ENCODE measurements at regions of chr1 and their contacts with region 1.

Region 1: DNA sequence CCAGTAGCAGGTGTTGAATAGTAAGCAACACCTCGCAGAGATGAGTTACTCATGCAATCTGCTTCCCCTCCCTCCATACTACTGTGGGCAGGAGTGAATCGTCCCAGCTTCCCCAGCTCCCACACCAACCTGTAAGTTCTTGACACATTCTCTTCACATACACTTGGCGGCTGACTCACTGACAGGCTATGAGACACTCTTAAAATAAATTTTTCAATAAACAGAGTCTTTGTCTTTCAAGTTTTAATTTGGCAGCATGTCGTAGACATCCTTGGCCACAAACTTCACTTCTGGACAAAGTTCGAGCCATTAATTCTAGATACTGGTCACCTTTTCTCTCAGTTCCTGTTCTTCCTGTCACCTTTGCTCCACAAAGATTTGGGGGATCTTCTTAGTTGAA is 290.7 kb downstream of the TM2D1 start:
- DNase-seq: peak; percentile 49
- ATAC-seq: peak; percentile 75 to 91

Region 2: DNA sequence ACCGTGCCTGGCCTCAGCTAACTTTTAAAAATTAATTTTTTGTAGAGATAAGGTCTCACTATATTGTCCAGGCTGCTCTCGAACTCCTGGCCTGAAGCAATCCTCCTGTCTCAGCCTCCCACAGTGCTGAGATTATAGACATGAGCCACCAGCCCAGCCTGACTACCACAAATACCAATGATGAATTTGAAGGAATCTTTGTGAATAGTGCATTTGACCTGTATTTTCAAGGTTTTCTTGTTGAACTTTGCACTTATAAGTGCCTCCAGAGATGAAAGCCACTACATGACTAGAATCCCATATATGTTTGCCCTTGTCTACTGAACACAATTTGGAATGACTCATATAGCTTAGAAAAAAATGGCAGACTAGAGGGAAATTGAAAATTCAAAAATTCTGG is 54.6 kb before region 1 on chr1:
- intact Hi-C with region 1: loop called in 1 of 2 experiments (anchors 5 kb)
- DNase-seq: no peak
- ATAC-seq: no peak

Region 3: DNA sequence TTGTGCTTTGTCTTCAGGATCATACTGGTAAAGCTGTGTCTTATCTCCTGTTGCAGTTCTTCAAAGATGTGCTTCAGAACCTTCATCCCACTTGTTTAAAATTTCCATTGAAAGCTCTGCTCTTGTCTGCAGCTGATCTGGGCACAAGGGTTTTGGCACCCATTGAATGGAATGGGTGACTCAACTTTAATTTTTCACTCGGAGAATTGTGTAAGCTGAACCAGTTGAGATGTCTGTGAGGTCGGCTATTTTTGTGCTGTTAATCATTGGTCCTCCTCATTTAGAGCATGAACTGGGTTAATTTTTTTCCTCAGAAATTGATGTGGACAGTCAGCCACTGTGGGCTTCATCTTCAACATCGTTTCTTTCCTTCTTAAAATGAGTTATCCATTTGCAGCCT is 38.6 kb after region 1 on chr1:
- intact Hi-C with region 1: no loop called
- DNase-seq: no peak
- ATAC-seq: peak in 1 of 2 donors; percentile 38

Region 4: GRCh38 chr1:61531716-61532115 is 97.4 kb after region 1 on chr1:
- intact Hi-C with region 1: no loop called
- DNase-seq: no peak
- ATAC-seq: no peak

Measured in left cardiac atrium (tissue), 4 donors.